PC-9 (cell line): ENCODE measurements at regions of chr1 and their contacts with region 1.

Region 1: DNA sequence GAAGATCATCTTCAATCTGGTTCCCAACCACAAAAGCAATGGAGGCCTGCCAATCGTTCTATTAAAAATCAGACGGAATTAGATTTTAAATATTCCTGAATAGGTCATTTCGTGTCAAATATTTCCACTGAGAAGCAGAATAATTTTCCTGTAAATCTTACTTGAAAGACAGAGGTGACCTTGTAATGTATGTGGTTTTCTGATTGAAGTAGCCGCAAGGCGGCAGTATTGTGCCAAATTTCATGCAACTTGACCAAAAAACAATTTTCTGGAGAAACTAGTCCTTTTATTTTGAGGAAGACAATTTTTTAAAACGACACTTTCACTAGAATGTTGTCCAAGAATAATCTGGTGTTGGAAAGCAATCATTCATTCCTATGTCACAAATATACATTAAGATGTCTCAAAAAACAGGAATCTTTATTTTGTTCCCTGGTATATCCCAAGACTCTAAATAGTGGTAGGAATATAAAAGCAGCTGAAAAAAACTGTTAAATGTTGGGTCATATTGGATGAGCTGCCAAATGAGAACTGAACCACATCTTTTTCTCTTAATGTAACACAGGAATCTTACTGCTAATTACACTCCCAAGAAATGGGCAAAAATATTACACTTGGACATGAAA is 33.6 kb downstream of the SPAG17 start:
- DNase-seq: peak; percentile 44 to 45
- H3K4me3 ChIP-seq: no peak overlapping the region
- H3K27ac ChIP-seq: no peak overlapping the region
- H3K4me1 ChIP-seq: peaks cover 11% of the 10 kb centered on the region; the same call in 1 of the 2 replicates
- H3K27me3 ChIP-seq: no peaks in the 10 kb centered on the region
- CTCF ChIP-seq: peak; percentile 95

Region 2: GRCh38 chr1:118077331-118078055 is 73.9 kb before region 1 on chr1:
- CTCF ChIA-PET with region 1: no interaction called
- POLR2A ChIA-PET with region 1: no interaction called
- intact Hi-C with region 1: loop called (anchors 5 kb)
- DNase-seq: peak in 1 of 2 experiments; percentile 2
- H3K4me3 ChIP-seq: no peak overlapping the region
- H3K27ac ChIP-seq: no peak overlapping the region
- H3K4me1 ChIP-seq: no peaks in the 10 kb centered on the region; the same call in 1 of the 2 replicates
- H3K27me3 ChIP-seq: no peaks in the 10 kb centered on the region
- CTCF ChIP-seq: peak; percentile 89

Region 3: DNA sequence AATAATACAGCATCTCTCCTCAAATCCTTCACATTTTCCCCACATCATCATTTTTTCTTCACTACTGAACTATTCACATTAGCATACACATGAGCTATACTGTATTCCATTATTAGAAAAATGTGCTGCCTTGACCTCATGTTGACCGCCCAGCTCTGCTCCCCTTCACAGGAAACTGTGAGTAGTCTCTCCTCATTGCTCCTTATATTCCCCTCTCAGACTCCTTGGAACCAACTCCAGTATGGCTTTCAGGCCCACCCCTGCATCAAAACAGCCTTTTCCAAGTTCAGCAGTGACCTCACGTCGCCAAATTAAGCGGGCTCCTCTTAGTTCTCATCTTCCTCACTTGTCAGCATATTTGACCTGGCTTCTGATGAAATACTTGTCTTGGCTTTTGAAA is 92.8 kb after region 1 on chr1:
- CTCF ChIA-PET with region 1: no interaction called
- POLR2A ChIA-PET with region 1: no interaction called
- intact Hi-C with region 1: no loop called
- DNase-seq: no peak
- H3K4me3 ChIP-seq: no peak overlapping the region
- H3K27ac ChIP-seq: no peak overlapping the region
- H3K4me1 ChIP-seq: no peaks in the 10 kb centered on the region
- H3K27me3 ChIP-seq: 0 out of 2 replicates have a peak, but pooled peaks cover 4% of the 10 kb centered on the region
- CTCF ChIP-seq: no peak

Region 4: GRCh38 chr1:118716782-118717181 is 565.4 kb after region 1 on chr1:
- CTCF ChIA-PET with region 1: no interaction called
- POLR2A ChIA-PET with region 1: no interaction called
- intact Hi-C with region 1: loop called (anchors 10 kb)
- DNase-seq: no peak
- H3K4me3 ChIP-seq: no peak overlapping the region
- H3K27ac ChIP-seq: no peak overlapping the region
- H3K4me1 ChIP-seq: no peaks in the 10 kb centered on the region
- H3K27me3 ChIP-seq: no peaks in the 10 kb centered on the region
- CTCF ChIP-seq: peak; percentile 52; the same call in 1 of the 2 replicates

Region 5: DNA sequence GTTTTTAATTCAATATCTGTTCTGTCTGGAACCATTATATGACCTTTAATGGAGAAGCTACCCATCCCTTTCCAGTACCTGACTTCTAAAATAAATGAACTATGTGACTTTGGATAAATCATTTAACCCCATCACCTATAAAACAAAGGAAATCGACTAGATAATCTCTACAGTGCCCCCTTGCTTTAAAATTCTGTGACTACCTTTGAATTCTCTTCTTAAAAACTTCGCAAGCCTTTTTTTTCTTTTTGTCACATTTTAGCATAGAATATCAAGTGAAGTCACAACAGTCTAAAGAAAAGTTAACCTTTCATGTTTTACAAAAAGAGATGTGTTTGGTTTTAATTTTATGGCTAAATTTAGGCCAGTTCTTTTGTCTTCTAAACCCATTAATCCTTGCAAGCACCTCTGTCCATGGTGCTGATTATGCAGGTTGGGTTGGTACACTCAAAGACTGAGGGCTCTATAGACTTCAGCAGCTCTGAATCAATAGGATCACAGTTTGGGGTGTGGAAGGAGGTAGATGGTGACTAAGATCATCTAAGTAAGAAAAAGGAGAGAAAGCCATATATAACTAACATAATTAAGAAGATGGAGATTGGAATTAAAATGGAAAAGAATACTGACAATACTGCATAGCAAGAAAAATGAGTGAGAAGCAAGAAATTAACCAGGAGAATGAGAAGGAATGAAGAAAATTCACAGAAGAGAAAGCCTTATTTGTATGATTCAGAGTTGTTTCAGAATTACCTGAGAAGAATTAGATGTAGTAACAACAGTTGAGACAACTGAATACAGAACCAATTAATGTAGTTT is 777.5 kb after region 1 on chr1:
- CTCF ChIA-PET with region 1: no interaction called
- POLR2A ChIA-PET with region 1: no interaction called
- intact Hi-C with region 1: no loop called
- DNase-seq: no peak
- H3K4me3 ChIP-seq: no peak overlapping the region
- H3K27ac ChIP-seq: no peak overlapping the region
- H3K4me1 ChIP-seq: no peaks in the 10 kb centered on the region
- H3K27me3 ChIP-seq: peaks cover 4% of the 10 kb centered on the region; the same call in 1 of the 2 replicates
- CTCF ChIP-seq: no peak; the same call in 1 of the 2 replicates

Region 6: GRCh38 chr1:119008483-119009311 is 857.3 kb after region 1 on chr1:
- CTCF ChIA-PET with region 1: no interaction called
- POLR2A ChIA-PET with region 1: no interaction called
- intact Hi-C with region 1: loop called (anchors 2 kb)
- DNase-seq: peak in 1 of 2 experiments; percentile 20
- H3K4me3 ChIP-seq: no peak overlapping the region
- H3K27ac ChIP-seq: no peak overlapping the region
- H3K4me1 ChIP-seq: no peaks in the 10 kb centered on the region
- H3K27me3 ChIP-seq: no peaks in the 10 kb centered on the region
- CTCF ChIP-seq: peak; percentile 85

Region 7: DNA sequence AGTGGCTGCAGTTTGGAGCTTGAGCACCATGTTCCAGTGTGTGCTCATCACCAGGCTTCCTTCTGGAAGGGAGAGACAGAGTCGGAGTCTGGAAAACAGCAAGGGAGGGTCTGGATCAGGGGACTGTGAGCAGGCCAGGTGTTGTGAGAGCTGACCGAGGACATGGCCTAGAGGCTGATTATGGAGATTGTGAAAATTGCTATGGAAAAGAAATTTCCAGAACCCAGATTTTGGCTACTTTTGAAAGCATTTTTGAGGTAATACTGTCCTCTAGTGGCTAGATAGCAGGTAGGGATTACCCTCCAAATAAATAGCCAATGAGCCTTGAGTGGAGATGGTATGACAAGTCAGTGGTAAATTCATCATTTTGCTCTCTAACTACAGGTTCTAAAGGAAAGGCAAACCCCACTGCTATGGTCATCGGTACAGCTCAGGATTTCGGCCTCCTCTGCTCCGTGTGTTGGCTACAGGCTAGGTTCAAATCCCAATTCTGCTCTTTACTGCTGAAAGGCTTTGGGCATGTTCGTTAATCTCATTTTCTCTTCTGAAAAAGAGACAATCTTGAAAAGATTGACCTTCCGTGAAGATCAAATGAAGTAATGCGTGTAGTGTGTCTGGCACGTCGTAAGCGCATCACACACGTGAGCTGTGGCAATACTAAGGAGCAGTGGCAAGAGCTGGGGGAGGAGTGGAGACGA is 1216.2 kb after region 1 on chr1:
- CTCF ChIA-PET with region 1: no interaction called
- POLR2A ChIA-PET with region 1: no interaction called
- intact Hi-C with region 1: loop called (anchors 1 kb)
- DNase-seq: no peak
- H3K4me3 ChIP-seq: no peak overlapping the region
- H3K27ac ChIP-seq: no peak overlapping the region
- H3K4me1 ChIP-seq: peaks cover 3% of the 10 kb centered on the region; the same call in 1 of the 2 replicates
- H3K27me3 ChIP-seq: no peaks in the 10 kb centered on the region
- CTCF ChIP-seq: peak; percentile 99